Colonic mucosa (tissue), 4 donors: ENCODE measurements at regions of chr10 and their contacts with region 1.

Region 1: GRCh38 chr10:102917962-102918816 is at the start of gene CNNM2:
- DNase-seq: peak; percentile 100
- H3K4me3 ChIP-seq: peak within 1 kb of the TSS; percentile 78
- H3K27ac ChIP-seq: peak within 1 kb of the TSS; percentile 83
- H3K4me1 ChIP-seq: peaks cover 3% of the 10 kb centered on the region
- H3K27me3 ChIP-seq: no peaks in the 10 kb centered on the region
- CTCF ChIP-seq: no peak
- total RNA-seq, gene CNNM2: 25.2 to 29.3 TPM

Region 2: DNA sequence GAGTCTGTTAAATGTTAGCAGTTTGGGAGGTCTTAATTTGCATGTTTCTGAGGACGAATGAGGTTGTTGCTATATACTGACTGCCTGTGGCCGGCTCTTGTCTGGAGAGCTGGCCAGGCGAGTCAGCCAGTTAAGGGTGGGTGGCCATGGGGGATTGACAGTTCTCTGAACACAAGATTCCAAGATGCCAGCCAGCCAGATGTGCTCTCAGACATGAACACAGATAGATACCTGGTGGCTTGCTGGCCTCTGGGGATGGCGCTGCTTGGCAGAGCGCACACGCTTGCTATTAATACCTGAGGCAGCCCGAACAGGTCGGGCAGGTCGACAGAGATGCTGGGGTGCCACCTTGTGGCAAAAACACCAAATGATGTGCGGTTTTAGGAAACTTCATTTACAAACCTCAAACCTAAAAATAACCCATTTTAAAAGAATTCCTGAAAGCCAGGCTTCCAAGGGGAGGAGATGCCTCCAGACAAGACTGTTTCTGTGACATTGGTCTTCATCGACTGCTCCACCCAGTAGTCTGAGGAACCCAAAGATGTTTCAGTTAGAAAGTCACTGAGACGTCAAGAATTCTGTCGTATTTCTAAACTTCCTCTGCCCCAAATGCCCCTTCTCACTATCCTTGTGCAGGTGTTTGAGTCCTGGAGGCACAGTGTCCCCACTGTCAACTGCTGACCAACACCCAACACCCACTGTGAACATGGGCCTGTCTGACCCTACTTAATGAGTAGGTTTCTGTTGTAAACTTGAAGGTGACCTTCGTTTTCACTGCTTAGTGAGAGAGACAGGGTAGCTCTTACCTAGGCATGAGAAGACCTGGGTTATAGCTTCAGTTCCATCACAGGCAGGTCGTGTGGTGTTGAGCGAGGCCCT is 151.5 kb after region 1 on chr10:
- intact Hi-C with region 1: loop called (anchors 2 kb)
- DNase-seq: peak; percentile 69
- H3K4me3 ChIP-seq: no peak overlapping the region
- H3K27ac ChIP-seq: no peak overlapping the region
- H3K4me1 ChIP-seq: no peaks in the 10 kb centered on the region
- H3K27me3 ChIP-seq: no peaks in the 10 kb centered on the region
- CTCF ChIP-seq: peak; percentile 58

Region 3: GRCh38 chr10:103244663-103245271 is 326.6 kb after region 1 on chr10:
- intact Hi-C with region 1: loop called (anchors 5 kb)
- DNase-seq: peak; percentile 82
- H3K4me3 ChIP-seq: no peak overlapping the region
- H3K27ac ChIP-seq: no peak overlapping the region
- H3K4me1 ChIP-seq: peaks cover 14% of the 10 kb centered on the region
- H3K27me3 ChIP-seq: no peaks in the 10 kb centered on the region
- CTCF ChIP-seq: peak; percentile 73

Region 4: DNA sequence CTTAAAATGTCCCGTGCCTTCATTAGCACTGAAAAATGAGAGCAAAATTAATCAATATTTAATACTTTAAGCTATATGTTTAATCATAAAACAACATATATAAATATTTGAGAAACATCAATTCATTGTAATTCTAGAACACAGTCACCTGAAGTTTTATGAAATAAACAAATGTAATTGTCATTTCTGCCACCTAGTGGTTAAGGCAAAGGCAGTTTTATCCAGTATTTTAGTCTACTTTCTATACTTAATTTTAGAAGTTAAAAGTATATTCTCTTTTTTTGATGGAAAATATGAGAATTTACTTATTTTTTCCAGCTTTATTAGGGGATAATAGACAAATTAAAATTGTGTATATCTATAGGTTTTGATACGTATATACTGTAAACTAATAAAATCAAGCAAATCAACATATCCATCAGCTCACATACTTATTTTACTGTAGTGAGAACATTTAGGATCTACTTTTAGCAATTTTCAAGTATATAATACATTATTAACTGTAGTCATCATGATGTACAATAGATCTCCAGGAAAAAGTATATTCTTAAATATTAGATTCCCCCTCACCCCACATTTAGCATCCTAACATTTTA is 415.8 kb after region 1 on chr10:
- intact Hi-C with region 1: loop called (anchors 10 kb)
- DNase-seq: no peak
- H3K4me3 ChIP-seq: no peak overlapping the region
- H3K27ac ChIP-seq: no peak overlapping the region
- H3K4me1 ChIP-seq: no peaks in the 10 kb centered on the region
- H3K27me3 ChIP-seq: no peaks in the 10 kb centered on the region
- CTCF ChIP-seq: peak; percentile 59